CD14-positive monocyte (primary cell): ENCODE measurements at regions of chr22 and their contacts with region 1.

Region 1: GRCh38 chr22:22060200-22061084 is 77.9 kb upstream of the TOP3B start:
- DNase-seq: peak; percentile 66 to 80 (median 73)
- H3K4me3 ChIP-seq: peak overlapping the region in 1 of 3 experiments; percentile 33
- H3K4me3 Mint-ChIP-seq: no peak overlapping the region
- H3K27ac ChIP-seq: peak overlapping the region; percentile 79 to 94
- H3K27ac Mint-ChIP-seq: peak overlapping the region; percentile 93 to 99 (median 96)
- H3K4me1 ChIP-seq: peaks cover 48 to 53% of the 10 kb centered on the region in 2 donors
- H3K4me1 Mint-ChIP-seq: peaks cover 47% of the 10 kb centered on the region
- H3K27me3 ChIP-seq: no peaks in the 10 kb centered on the region
- H3K27me3 Mint-ChIP-seq: peaks cover 0 to 6% (median 0%) of the 10 kb centered on the region in 3 donors
- CTCF ChIP-seq: peak; percentile 94

Region 2: GRCh38 chr22:21837248-21837979 is 223.0 kb before region 1 on chr22:
- intact Hi-C with region 1: no loop called
- DNase-seq: no peak
- H3K4me3 ChIP-seq: no peak overlapping the region
- H3K4me3 Mint-ChIP-seq: no peak overlapping the region
- H3K27ac ChIP-seq: peak overlapping the region in 1 of 2 donors; percentile 12
- H3K27ac Mint-ChIP-seq: peak overlapping the region; percentile 34 to 77 (median 67)
- H3K4me1 ChIP-seq: peaks cover 5 to 9% of the 10 kb centered on the region in 2 donors
- H3K4me1 Mint-ChIP-seq: peaks cover 30% of the 10 kb centered on the region
- H3K27me3 ChIP-seq: no peaks in the 10 kb centered on the region
- H3K27me3 Mint-ChIP-seq: peaks cover 0 to 2% (median 0%) of the 10 kb centered on the region in 3 donors
- CTCF ChIP-seq: no peak

Region 3: DNA sequence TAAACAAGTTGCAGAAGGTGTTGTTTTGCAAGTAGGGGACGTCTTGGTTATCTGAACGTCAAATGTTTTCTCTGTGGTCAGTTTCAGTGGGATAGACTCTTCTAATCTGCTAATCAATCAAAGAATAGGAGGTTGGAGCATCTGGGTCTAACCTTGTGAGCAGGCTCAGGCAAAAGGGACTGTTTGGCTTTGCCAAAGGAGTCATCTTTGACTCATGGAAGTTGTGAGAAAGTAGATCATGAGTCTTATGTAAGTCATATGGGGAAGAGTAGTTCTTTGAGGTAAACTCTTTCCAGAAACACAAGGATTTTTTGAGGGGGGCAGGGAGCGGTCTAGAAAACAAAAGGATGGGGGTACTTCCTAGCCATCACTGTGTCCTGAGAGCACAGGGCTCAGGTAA is 50.8 kb before region 1 on chr22:
- intact Hi-C with region 1: no loop called
- DNase-seq: no peak
- H3K4me3 ChIP-seq: no peak overlapping the region
- H3K4me3 Mint-ChIP-seq: peak overlapping the region in 1 of 2 donors; percentile 8
- H3K27ac ChIP-seq: no peak overlapping the region
- H3K27ac Mint-ChIP-seq: no peak overlapping the region
- H3K4me1 ChIP-seq: no peaks in the 10 kb centered on the region
- H3K4me1 Mint-ChIP-seq: no peaks in the 10 kb centered on the region
- H3K27me3 ChIP-seq: no peaks in the 10 kb centered on the region
- H3K27me3 Mint-ChIP-seq: peaks cover 5 to 10% (median 8%) of the 10 kb centered on the region in 3 donors
- CTCF ChIP-seq: no peak

Region 4: DNA sequence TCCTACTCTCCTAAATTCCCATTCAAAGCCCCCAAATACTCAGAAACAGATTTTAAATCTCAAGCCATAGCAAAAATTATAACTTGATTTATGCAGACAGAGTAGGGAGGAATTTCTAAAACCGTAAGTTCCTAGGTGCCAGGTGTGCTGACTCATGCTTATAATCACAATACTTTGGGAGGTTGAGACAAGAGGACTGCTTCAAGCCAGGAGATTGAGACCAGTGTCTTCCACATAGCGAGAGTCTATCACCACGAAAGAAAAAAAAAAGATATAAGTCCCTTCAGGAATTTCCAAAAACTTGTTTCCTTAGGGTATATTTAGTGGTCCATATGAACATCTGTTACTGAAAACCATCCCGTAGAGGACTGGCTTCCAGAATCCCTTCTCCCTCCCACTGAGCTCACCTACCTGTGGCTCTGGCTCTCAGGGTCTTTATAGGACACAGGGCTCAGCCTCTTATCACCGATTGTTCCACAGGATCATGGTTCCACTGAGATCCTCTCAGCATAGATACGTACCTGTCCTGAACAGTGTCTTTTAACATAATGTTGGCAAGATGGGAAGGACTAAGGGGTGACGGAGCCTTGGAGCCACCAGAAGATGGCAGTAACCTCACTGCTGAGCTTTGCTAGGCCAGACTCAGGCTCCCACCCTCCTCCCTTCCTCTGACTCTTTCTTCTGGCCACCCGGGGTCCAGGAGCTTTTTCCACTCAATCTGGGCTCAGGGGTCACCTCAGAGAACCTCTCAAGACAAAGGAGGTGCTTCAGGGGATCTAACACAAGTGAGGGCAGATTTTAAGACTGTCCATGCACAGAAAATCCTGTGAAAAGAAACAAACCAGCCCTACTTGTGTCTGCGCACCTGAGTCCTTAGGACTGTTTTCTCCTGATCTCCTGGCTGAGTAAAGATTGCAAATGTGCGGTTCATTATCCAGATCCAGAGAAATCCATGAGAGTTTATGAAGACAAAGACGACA is 39.7 kb after region 1 on chr22:
- intact Hi-C with region 1: loop called in 1 of 2 experiments (anchors 5 kb)
- DNase-seq: peak in 1 of 3 donors; percentile 32
- H3K4me3 ChIP-seq: no peak overlapping the region
- H3K4me3 Mint-ChIP-seq: no peak overlapping the region
- H3K27ac ChIP-seq: no peak overlapping the region
- H3K27ac Mint-ChIP-seq: no peak overlapping the region
- H3K4me1 ChIP-seq: peaks cover 24 to 44% of the 10 kb centered on the region in 2 donors
- H3K4me1 Mint-ChIP-seq: peaks cover 31% of the 10 kb centered on the region
- H3K27me3 ChIP-seq: peaks cover 0 to 1% of the 10 kb centered on the region in 2 donors
- H3K27me3 Mint-ChIP-seq: peaks cover 4 to 11% (median 7%) of the 10 kb centered on the region in 3 donors
- CTCF ChIP-seq: peak; percentile 39

Region 5: DNA sequence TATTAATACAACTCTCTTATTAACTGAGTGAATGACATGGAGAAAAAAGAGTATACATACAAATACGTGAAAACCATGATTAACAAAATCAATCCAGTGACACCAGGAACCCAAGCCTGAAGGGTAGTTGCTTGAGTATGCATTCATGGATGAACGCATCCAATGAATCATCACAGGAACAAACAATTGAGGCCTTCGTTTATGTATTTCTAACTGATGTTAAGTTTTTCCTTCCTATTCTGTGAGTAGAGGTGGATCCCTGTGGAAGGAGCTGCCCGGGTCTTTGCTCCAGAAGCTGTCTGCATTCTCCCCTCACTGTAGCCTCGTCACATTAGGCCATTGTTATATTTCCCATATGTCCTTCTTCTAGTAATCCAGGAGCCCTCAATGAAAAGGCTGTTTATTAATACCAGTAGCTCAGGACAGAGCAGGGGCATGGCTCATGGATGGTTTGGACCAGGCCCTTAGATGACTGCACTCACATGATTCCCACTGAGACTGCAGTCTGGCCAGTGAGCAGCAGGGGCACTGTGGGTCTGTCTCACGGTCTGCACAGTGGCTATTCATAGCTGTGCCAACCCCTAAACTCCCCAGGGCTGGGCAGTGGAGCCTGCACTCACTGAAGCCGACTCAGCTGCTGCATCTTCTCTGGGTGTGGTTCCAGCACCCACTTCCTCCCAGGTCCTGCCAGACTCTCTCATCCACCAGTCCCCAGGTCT is 50.3 kb after region 1 on chr22:
- intact Hi-C with region 1: loop called in 1 of 2 experiments (anchors 5 kb)
- DNase-seq: peak; percentile 80 to 85 (median 83)
- H3K4me3 ChIP-seq: no peak overlapping the region
- H3K4me3 Mint-ChIP-seq: no peak overlapping the region
- H3K27ac ChIP-seq: peak overlapping the region in 1 of 2 donors; percentile 75
- H3K27ac Mint-ChIP-seq: peak overlapping the region in 2 of 7 donors; percentile 58 to 64
- H3K4me1 ChIP-seq: peaks cover 17 to 33% of the 10 kb centered on the region in 2 donors
- H3K4me1 Mint-ChIP-seq: peaks cover 29% of the 10 kb centered on the region
- H3K27me3 ChIP-seq: no peaks in the 10 kb centered on the region
- H3K27me3 Mint-ChIP-seq: peaks cover 0 to 4% (median 2%) of the 10 kb centered on the region in 3 donors
- CTCF ChIP-seq: peak; percentile 79

Region 6: DNA sequence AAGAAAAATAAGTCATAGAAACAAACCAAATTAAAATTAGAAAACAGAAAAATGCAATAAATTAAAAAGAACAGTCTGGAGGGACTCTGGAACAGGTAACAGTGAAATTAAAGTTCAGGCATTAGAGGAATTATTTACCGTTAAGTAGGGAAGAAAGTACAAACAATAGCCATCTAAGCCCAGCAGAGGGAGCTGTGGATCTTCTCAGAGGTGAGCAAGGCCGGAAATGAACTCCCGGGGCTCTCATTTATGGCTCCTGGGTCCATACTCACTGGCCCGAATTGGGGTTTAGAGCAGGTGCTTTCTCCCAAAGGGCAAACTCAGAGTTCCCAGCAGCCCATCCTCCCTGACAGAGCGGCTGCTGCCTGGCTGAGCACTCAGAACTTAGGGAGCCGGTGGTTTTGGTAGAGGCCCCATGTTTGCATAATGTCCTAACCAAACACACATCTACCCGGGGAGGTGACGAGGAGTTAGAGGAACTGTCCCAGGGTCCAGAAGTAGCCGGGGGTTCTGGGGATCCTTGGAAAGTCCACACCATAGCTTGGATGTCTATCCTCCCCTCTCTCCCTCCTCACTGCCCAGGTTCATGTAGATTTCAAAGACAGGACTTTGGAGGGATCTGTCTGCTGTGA is 96.4 kb after region 1 on chr22:
- intact Hi-C with region 1: loop called in 1 of 2 experiments (anchors 5 kb)
- DNase-seq: peak; percentile 68 to 80 (median 77)
- H3K4me3 ChIP-seq: peak overlapping the region in 1 of 3 experiments; percentile 53
- H3K4me3 Mint-ChIP-seq: peak overlapping the region; percentile 39 to 75
- H3K27ac ChIP-seq: peak overlapping the region in 1 of 2 donors; percentile 69
- H3K27ac Mint-ChIP-seq: peak overlapping the region in 4 of 7 donors; percentile 48 to 74 (median 66)
- H3K4me1 ChIP-seq: peaks cover 40 to 52% of the 10 kb centered on the region in 2 donors
- H3K4me1 Mint-ChIP-seq: peaks cover 48% of the 10 kb centered on the region
- H3K27me3 ChIP-seq: no peaks in the 10 kb centered on the region
- H3K27me3 Mint-ChIP-seq: peaks cover 0 to 2% (median 2%) of the 10 kb centered on the region in 3 donors
- CTCF ChIP-seq: peak; percentile 84